Activated naive CD4-positive, alpha-beta T cell treated with anti-CD3 and anti-CD28 coated beads for 36 hours (primary cell): ENCODE measurements at regions of chr4 and their contacts with region 1.

Region 1: GRCh38 chr4:10096201-10096977 is 20.2 kb downstream of the WDR1 start:
- DNase-seq: peak; percentile 90
- H3K4me3 Mint-ChIP-seq: no peak overlapping the region
- H3K27ac Mint-ChIP-seq: peak overlapping the region; percentile 81
- H3K4me1 Mint-ChIP-seq: peaks cover 91% of the 10 kb centered on the region
- H3K27me3 Mint-ChIP-seq: no peaks in the 10 kb centered on the region

Region 2: GRCh38 chr4:10072420-10073017 is 23.9 kb before region 1 on chr4:
- CTCF ChIA-PET with region 1: interaction called, 4 read pairs
- intact Hi-C with region 1: loop called (anchors 2 kb)
- DNase-seq: no peak
- H3K4me3 Mint-ChIP-seq: no peak overlapping the region
- H3K27ac Mint-ChIP-seq: peak overlapping the region; percentile 68
- H3K4me1 Mint-ChIP-seq: peaks cover 5% of the 10 kb centered on the region
- H3K27me3 Mint-ChIP-seq: no peaks in the 10 kb centered on the region

Region 3: GRCh38 chr4:10106421-10107039 is 10.1 kb after region 1 on chr4:
- CTCF ChIA-PET with region 1: interaction called, 4 read pairs
- intact Hi-C with region 1: loop called (anchors 1 kb)
- DNase-seq: peak; percentile 92
- H3K4me3 Mint-ChIP-seq: peak overlapping the region; percentile 52
- H3K27ac Mint-ChIP-seq: peak overlapping the region; percentile 90
- H3K4me1 Mint-ChIP-seq: peaks cover 100% of the 10 kb centered on the region
- H3K27me3 Mint-ChIP-seq: no peaks in the 10 kb centered on the region